ENCODE measurements at regions of chr12 and their contacts with region 1.

Region 1: DNA sequence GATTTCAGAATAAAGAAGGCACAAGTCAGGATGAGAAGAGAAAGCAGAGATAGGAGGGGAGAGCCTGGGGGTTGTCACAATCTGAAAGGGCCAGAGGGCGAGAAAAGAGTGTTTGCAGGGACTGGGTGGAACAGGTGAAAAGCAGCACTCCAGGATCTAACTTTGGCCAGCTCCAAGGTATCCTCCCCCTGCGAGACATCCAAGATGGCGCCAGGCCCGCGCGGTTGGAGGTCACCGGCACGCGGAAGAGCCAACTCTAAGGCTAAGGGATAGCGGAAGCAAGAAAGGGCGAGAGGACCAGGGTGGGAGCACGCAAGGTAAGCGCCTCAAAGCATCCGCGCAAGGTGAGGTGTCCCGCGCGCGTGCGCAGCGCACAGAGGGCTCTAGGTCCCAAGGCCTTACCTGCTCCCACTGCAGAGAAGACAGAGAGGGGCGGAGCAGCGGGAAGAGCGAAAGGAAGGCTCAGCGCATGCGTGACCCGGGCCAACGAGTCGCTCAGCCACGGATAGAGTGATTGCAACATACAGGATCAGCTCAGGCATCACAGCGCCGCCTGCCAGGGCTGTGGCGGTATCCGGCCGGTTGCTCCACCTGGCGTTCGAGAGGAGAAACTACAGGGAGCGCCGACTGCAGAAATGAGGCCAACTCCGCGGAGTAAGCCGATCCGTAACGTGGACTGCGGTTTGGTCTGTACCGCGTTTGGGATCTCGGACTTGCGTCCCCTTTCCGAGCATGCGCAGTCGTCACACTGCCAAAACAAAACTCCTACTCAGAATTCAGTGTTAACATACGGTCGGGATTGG is at the start of gene ATP5MC2:
- DNase-seq: peak; percentile 99
- ATAC-seq: peak; percentile 96
- H3K4me3 ChIP-seq: peak within 1 kb of the TSS; percentile 72
- H3K27ac ChIP-seq: peak within 1 kb of the TSS; percentile 62
- H3K4me1 ChIP-seq: peaks cover 16% of the 10 kb centered on the region
- H3K27me3 ChIP-seq: no peaks in the 10 kb centered on the region
- CTCF ChIP-seq: peak; percentile 99
- total RNA-seq, gene ATP5MC2: 244 and 322 TPM in 2 replicates

Region 2: DNA sequence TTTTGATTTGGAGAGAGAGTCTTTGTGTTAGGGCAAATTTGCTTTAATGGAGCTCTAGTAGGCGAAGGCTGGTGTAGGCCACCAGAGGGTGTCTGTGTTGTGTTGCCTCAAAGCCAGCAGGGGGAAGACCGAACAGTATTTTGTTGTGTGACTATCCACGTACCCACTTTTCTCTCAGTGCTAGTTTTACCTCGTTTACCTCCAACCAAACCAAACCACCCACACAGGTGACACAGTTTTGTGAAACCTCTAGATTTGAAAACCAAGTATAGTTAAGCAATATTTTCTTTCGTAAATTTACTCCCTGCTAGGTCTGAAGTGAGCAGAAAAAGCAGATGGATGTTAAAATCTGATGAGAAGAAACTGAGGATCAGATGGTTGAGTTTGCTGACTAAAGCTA is 132.3 kb before region 1 on chr12:
- CTCF ChIA-PET with region 1: interaction called, 15 read pairs
- POLR2A ChIA-PET with region 1: interaction called, 5 read pairs
- intact Hi-C with region 1: loop called (anchors 1 kb)
- DNase-seq: peak; percentile 69
- ATAC-seq: peak; percentile 89
- H3K4me3 ChIP-seq: no peak overlapping the region
- H3K27ac ChIP-seq: no peak overlapping the region
- H3K4me1 ChIP-seq: peaks cover 7% of the 10 kb centered on the region
- H3K27me3 ChIP-seq: no peaks in the 10 kb centered on the region
- CTCF ChIP-seq: peak; percentile 94

Region 3: GRCh38 chr12:53561590-53561953 is 114.3 kb before region 1 on chr12:
- CTCF ChIA-PET with region 1: no interaction called
- POLR2A ChIA-PET with region 1: no interaction called
- intact Hi-C with region 1: loop called (anchors 1 kb)
- DNase-seq: peak; percentile 91
- ATAC-seq: peak; percentile 92
- H3K4me3 ChIP-seq: peak overlapping the region; percentile 10; the same call in 1 of the 2 replicates
- H3K27ac ChIP-seq: peak overlapping the region; percentile 82
- H3K4me1 ChIP-seq: peaks cover 38% of the 10 kb centered on the region
- H3K27me3 ChIP-seq: no peaks in the 10 kb centered on the region
- CTCF ChIP-seq: no peak

Region 4: GRCh38 chr12:53599579-53599978 is 76.3 kb before region 1 on chr12:
- CTCF ChIA-PET with region 1: no interaction called
- POLR2A ChIA-PET with region 1: no interaction called
- intact Hi-C with region 1: loop called (anchors 2 kb)
- DNase-seq: no peak
- ATAC-seq: no peak
- H3K4me3 ChIP-seq: no peak overlapping the region
- H3K27ac ChIP-seq: no peak overlapping the region
- H3K4me1 ChIP-seq: no peaks in the 10 kb centered on the region
- H3K27me3 ChIP-seq: no peaks in the 10 kb centered on the region
- CTCF ChIP-seq: peak; percentile 43; the same call in 1 of the 2 replicates

Region 5: GRCh38 chr12:53659011-53659551 is 16.8 kb before region 1 on chr12:
- CTCF ChIA-PET with region 1: interaction called, 10 read pairs
- POLR2A ChIA-PET with region 1: interaction called, 10 read pairs
- intact Hi-C with region 1: loop called (anchors 1 kb)
- DNase-seq: peak; percentile 95
- ATAC-seq: peak; percentile 99
- H3K4me3 ChIP-seq: peak overlapping the region; percentile 25; the same call in 1 of the 2 replicates
- H3K27ac ChIP-seq: peak overlapping the region; percentile 90
- H3K4me1 ChIP-seq: peaks cover 22% of the 10 kb centered on the region
- H3K27me3 ChIP-seq: no peaks in the 10 kb centered on the region
- CTCF ChIP-seq: no peak

Region 6: GRCh38 chr12:53688134-53688533 is 12.3 kb after region 1 on chr12:
- CTCF ChIA-PET with region 1: no interaction called
- POLR2A ChIA-PET with region 1: no interaction called
- intact Hi-C with region 1: no loop called
- DNase-seq: no peak
- ATAC-seq: no peak
- H3K4me3 ChIP-seq: no peak overlapping the region
- H3K27ac ChIP-seq: no peak overlapping the region
- H3K4me1 ChIP-seq: no peaks in the 10 kb centered on the region
- H3K27me3 ChIP-seq: no peaks in the 10 kb centered on the region
- CTCF ChIP-seq: no peak

Region 7: DNA sequence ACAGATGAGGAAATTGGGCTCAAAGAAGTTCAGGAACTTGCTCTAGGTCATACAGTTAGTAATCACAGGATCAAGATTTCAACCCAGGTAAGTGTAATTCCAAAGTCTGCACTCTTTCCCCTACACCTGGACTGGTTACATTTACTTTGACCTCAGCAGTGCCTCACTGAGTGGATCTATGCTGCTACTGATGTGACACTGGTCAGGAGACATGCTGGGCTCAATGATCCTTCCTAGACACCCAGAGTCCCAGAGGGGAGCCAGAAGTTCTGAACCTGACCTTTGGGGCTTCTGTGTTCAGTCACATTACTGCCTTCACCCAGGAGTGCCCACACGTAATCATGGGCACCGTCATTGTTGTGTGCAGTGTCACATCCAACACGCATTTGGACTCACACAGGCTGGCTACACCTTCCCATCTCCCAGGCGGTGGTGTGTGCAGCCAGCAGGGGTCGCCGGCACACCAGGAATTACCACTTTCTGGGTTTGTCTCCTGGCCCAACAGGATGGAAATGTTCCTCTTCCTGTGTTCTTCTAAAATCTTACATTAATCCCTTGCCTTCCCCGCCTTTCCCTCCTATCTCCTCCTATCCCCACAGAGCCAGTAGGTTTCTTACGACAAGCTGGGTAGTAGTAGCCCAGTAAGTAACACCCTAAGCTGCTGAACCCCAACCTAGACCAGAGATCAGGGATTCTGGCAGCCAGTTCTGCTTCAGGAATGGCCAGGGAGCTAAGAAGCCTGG is 25.8 kb after region 1 on chr12:
- CTCF ChIA-PET with region 1: no interaction called
- POLR2A ChIA-PET with region 1: no interaction called
- intact Hi-C with region 1: no loop called
- DNase-seq: peak; percentile 81
- ATAC-seq: peak; percentile 99
- H3K4me3 ChIP-seq: no peak overlapping the region
- H3K27ac ChIP-seq: no peak overlapping the region
- H3K4me1 ChIP-seq: no peaks in the 10 kb centered on the region
- H3K27me3 ChIP-seq: 0 out of 2 replicates have a peak, but pooled peaks cover 4% of the 10 kb centered on the region
- CTCF ChIP-seq: peak; percentile 94